Endothelial cell of umbilical vein (primary cell): ENCODE measurements at regions of chr1 and their contacts with region 1.

Region 1: GRCh38 chr1:57616921-57617320 is 193.1 kb upstream of the DAB1 start:
- DNase-seq: no peak
- H3K4me3 ChIP-seq: no peak overlapping the region
- H3K27ac ChIP-seq: no peak overlapping the region
- H3K4me1 ChIP-seq: peaks cover 6% of the 10 kb centered on the region
- H3K27me3 ChIP-seq: no peaks in the 10 kb centered on the region
- CTCF ChIP-seq: no peak
- POLR2A ChIP-seq: no peak

Region 2: DNA sequence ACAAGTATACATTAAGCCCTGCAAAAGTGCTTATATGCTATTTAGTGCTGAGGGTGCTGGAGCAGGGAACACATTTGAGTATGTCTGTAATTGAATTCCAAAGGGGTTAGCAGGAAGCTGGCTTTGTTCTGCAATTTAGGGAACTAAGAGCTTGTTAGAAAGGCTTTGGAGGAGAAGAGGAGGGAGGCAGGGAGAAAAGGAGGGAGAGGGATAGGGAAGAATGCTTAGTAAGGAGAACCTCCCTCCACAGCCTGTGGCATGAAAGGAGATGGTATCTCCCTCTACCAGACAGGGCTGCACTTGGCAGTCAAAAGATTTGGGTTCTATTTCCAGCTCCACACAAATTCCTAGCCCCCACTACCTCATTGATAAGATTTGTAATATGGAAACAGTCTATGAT is 410.9 kb before region 1 on chr1:
- CTCF ChIA-PET with region 1: no interaction called
- POLR2A ChIA-PET with region 1: no interaction called
- dilution Hi-C with region 1: no loop called
- intact Hi-C with region 1: no loop called
- DNase-seq: no peak
- H3K4me3 ChIP-seq: no peak overlapping the region
- H3K27ac ChIP-seq: no peak overlapping the region
- H3K4me1 ChIP-seq: no peaks in the 10 kb centered on the region
- H3K27me3 ChIP-seq: no peaks in the 10 kb centered on the region
- CTCF ChIP-seq: no peak
- POLR2A ChIP-seq: no peak

Region 3: DNA sequence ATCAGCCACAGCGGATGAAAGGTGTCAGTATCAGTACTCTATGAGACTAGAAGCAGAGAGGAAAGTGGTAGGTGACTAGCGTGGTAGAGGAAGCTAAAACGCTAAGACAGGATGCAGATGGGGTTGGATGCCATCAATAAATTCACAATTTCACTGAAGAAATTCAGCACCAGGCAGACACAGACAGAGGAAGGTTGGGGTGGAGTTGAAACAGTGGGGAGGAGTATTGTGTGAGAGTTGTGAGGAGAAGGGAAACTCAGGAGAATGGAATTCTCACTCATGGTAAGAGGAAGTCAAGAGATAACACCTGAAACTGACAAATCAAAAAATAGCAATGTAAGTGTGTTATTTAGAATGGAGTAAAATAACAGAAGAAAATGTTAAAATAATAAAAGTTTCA is 15.5 kb after region 1 on chr1:
- CTCF ChIA-PET with region 1: interaction called, 11 read pairs
- POLR2A ChIA-PET with region 1: no interaction called
- dilution Hi-C with region 1: no loop called
- intact Hi-C with region 1: no loop called
- DNase-seq: peak; percentile 4
- H3K4me3 ChIP-seq: no peak overlapping the region
- H3K27ac ChIP-seq: no peak overlapping the region
- H3K4me1 ChIP-seq: no peaks in the 10 kb centered on the region
- H3K27me3 ChIP-seq: no peaks in the 10 kb centered on the region
- CTCF ChIP-seq: no peak
- POLR2A ChIP-seq: no peak

Region 4: GRCh38 chr1:57655161-57655560 is 38.2 kb after region 1 on chr1:
- CTCF ChIA-PET with region 1: no interaction called
- POLR2A ChIA-PET with region 1: interaction called, 10 read pairs
- dilution Hi-C with region 1: no loop called
- intact Hi-C with region 1: no loop called
- DNase-seq: no peak
- H3K4me3 ChIP-seq: no peak overlapping the region
- H3K27ac ChIP-seq: no peak overlapping the region
- H3K4me1 ChIP-seq: no peaks in the 10 kb centered on the region
- H3K27me3 ChIP-seq: no peaks in the 10 kb centered on the region
- CTCF ChIP-seq: no peak
- POLR2A ChIP-seq: no peak

Region 5: GRCh38 chr1:58727363-58727762 is 1110.4 kb after region 1 on chr1:
- CTCF ChIA-PET with region 1: no interaction called
- POLR2A ChIA-PET with region 1: no interaction called
- dilution Hi-C with region 1: no loop called
- intact Hi-C with region 1: no loop called
- DNase-seq: peak; percentile 97
- H3K4me3 ChIP-seq: no peak overlapping the region
- H3K27ac ChIP-seq: peak overlapping the region; percentile 88
- H3K4me1 ChIP-seq: peaks cover 19% of the 10 kb centered on the region
- H3K27me3 ChIP-seq: no peaks in the 10 kb centered on the region
- CTCF ChIP-seq: no peak
- POLR2A ChIP-seq: no peak